ENCODE measurements at regions of chr17 and their contacts with region 1.

Region 1: DNA sequence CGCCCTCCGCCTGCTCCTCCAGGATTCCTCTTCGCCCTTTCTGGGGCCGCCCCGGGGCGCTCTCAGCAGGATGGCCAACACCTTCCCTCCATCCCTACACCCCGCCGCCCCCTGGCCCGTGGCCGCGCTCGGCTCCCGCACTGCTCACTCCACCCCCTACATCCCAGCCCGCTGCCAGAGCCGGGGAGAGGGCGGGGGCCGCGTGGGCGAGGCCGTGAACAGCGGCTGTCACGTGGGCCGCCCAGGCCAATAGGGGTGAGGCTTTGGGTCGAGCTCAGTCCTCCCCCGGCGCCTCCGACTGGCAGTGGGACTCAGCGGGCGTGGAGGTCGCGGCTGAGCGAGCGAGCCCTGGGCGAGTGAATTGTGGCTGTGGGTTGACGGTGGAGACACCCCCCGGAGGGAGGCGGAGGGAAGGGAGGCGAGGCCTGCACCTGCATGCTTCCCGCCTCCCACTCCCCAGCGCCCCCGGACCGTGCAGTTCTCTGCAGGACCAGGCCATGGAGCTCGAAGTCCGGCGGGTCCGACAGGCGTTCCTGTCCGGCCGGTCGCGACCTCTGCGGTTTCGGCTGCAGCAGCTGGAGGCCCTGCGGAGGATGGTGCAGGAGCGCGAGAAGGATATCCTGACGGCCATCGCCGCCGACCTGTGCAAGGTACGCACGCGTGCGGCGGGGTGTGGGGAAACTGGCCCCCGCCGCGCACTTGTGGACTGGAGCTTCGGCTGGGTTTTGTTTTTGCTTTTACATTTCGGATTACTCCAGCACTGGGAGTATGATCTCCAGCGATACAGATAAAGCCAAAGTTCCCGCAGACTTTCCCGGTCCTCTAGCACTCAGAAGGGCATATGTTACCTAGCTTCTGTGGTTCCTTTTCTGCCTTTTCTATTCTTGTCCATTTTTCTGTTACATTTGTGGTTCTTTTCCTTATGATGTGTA is at the start of gene ALDH3A2:
- DNase-seq: peak; percentile 99 to 100 (median 99)
- H3K4me3 ChIP-seq: peak within 1 kb of the TSS; percentile 55 to 100 (median 87)
- H3K27ac ChIP-seq: peak within 1 kb of the TSS; percentile 92 to 100 (median 99)
- H3K27me3 ChIP-seq: no peaks in the 10 kb centered on the region
- CTCF ChIP-seq: peak in 43 of 56 donors; percentile 5 to 65 (median 38)
- total RNA-seq, gene ALDH3A2: 54.2 to 160 (median 92.6) TPM

Region 2: DNA sequence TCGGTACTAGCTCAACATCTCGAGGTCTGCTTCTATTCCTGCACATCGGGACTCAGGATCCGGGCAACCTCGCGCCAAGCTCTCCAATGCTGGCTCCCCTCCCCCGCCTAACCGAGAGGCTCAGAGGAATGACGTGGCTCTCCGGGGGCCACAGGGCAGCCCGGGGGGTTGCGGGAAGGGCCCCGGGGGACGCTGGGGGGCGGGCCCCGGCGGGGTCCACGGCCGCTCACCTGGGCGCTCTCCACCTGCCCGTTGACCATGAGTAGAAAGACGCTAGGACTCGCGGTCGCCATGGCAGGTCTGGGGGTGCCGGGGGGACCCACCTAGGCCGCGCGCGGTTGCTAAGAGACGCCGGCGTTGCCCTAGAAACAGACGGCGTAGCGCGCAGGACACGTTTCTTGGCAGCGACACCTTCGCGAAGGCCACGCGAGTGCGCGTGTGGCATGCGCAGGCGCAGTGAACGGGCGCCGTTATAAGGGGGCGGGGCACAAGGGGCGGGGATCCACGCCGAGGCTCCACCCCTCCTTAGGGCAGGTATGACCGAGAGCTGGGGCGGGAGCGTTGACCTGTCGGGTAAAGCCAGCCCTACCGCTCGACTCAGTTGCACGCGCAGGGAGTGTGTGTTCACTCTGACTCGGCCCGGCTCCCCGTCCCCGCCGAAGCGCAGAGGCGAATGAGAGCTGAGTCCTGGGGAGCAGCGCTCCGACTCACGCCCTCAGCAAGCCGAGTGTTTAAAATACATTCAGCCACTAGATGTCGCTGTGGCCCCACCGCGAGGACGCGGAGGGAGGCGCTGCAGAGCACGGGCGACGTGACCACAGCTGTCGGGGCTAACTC is 286.2 kb before region 1 on chr17 and contains the start of gene B9D1:
- intact Hi-C with region 1: loop called in 1 of 2 experiments (anchors 5 kb)
- DNase-seq: peak; percentile 88 to 96 (median 92)
- H3K4me3 ChIP-seq: peak within 1 kb of the TSS; percentile 57 to 98 (median 82)
- H3K27ac ChIP-seq: peak within 1 kb of the TSS in 58 of 59 donors; percentile 44 to 96 (median 89)
- H3K27me3 ChIP-seq: no peaks in the 10 kb centered on the region
- CTCF ChIP-seq: peak; percentile 97 to 100 (median 100)
- total RNA-seq, gene B9D1: 10.3 to 48.5 (median 28.0) TPM

Region 3: DNA sequence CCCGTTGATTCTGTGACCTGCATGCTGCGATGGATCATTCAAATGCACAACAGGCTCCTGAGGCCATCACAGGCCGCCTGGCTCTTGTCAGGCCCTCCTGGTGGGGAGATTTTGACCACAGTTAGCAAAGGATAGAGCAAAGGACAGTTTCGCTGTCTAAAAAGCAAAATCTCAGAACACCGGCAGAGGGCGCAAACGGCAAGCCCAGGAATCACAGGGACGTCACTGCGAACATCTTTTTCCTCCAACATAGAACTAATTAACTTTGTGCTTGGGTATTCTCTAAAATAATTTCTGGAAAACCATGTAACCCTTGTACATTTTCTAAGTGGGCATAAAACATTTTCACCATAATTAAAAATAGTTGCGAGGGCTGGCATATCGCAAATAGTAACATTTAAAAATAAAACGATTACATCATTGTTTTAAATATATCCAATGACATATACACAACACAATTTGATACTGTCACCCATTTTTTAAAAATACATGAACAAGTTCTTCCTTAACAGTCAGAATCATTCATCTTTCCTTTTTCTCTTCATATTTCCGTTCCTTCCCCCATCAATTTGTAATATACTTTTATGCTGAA is 134.7 kb before region 1 on chr17:
- intact Hi-C with region 1: loop called (anchors 5 kb)
- DNase-seq: peak in 9 of 10 donors; percentile 59 to 81 (median 73)
- H3K4me3 ChIP-seq: peak overlapping the region in 34 of 59 donors; percentile 0 to 50 (median 22)
- H3K27ac ChIP-seq: peak overlapping the region in 51 of 59 donors; percentile 6 to 81 (median 59)
- H3K27me3 ChIP-seq: no peaks in the 10 kb centered on the region
- CTCF ChIP-seq: peak; percentile 80 to 97 (median 92)

Region 4: DNA sequence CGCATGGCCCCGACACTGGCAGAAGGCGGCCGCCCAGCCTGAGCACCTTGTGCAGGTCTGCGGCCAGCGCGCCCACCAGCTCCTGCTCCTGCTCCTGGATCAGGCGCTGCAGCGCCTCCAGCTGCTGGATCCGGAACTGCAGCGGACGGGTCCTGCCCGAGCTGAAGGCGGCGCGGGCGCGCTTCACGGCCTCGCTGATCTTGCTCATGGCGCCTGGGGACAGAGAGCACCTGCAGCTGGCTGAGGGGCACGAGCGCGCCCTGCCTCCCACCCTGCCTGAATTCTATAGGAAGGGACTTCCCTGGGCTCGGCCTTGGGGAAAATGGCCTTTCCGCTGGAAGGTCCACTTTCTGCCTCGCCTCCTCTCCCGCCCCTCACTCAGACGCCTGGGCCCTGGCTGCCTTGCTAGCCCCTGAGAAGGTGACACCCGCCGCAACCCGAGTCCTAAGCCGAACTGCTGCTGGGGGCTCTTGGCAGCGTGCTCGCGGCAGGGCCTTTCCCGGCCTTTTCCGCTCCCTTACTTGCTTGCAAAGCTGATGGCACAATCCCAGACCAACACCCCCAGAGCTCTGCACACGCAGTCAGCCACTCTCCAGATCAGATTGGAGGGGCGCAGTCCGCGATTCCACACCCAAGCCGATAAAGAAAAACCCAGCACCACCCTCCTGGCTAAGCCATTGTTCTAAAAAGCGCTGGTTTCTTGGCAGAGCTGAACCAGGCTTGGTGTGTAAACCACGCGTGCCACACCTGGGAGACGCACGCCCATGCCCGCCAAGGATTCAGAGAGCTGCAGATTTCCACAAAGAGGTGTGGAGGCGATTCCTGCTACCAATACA is 96.4 kb after region 1 on chr17:
- intact Hi-C with region 1: loop called in 1 of 2 experiments (anchors 1 kb)
- DNase-seq: peak; percentile 90 to 97 (median 94)
- H3K4me3 ChIP-seq: peak overlapping the region; percentile 45 to 76 (median 61)
- H3K27ac ChIP-seq: peak overlapping the region in 51 of 59 donors; percentile 7 to 84 (median 62)
- H3K27me3 ChIP-seq: no peaks in the 10 kb centered on the region
- CTCF ChIP-seq: peak; percentile 73 to 97 (median 92)

Region 5: DNA sequence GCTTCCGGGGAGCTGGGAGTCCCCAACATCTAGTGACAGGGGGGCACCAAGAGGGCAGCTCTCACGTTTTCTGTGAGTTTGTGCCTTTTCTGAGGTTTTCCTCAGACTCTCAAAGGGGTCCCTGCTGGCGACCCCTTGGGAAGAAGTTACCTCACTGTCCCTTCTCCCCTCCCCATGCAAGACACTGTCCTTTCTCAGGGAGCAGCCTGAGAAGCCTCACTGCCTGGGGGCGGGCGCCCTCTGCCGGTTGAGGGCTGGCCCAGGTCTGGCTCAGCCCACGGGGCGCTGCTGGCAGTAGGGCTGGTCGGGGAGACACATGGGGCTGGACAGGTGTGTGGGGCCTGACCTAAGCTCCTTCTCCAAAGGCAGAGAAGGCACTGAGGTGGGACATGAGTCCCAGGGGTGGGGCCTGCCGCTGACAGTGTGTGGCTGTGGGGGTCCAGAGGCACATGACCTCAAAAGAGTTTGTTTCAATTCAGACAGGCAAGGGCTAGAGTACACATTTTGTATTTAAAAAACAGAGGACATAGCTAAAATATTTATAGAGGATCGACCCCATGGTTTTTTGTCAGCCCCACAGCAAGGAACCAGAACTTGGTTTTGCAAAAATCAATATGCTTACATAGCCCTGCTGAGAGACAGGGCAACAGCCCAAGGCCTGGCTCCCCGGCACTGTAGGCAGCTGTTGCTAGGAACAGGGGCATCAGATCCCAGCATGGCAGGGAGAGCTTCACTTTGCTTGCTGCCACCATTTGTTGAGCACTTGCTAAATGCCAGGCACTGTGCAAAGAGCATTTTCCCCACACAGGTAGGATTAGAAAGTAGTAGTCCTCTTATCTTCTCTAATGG is 117.9 kb after region 1 on chr17:
- intact Hi-C with region 1: loop called in 1 of 2 experiments (anchors 2 kb)
- DNase-seq: peak; percentile 77 to 91 (median 84)
- H3K4me3 ChIP-seq: peak overlapping the region in 4 of 59 donors; percentile 5 to 23 (median 8)
- H3K27ac ChIP-seq: peak overlapping the region in 9 of 59 donors; percentile 6 to 58 (median 39)
- H3K27me3 ChIP-seq: no peaks in the 10 kb centered on the region
- CTCF ChIP-seq: peak; percentile 71 to 99 (median 97)